ENCODE measurements at regions of chr14 and their contacts with region 1.

Region 1: GRCh38 chr14:50773632-50774541 is 57.1 kb downstream of the NIN start:
- DNase-seq: peak in 1 of 2 donors; percentile 77
- ATAC-seq: peak; percentile 78
- H3K4me3 ChIP-seq: no peak overlapping the region
- H3K27ac ChIP-seq: peak overlapping the region in 1 of 2 donors; percentile 42
- H3K4me1 ChIP-seq: peaks cover 3 to 4% of the 10 kb centered on the region in 2 donors
- H3K27me3 ChIP-seq: no peaks in the 10 kb centered on the region

Region 2: DNA sequence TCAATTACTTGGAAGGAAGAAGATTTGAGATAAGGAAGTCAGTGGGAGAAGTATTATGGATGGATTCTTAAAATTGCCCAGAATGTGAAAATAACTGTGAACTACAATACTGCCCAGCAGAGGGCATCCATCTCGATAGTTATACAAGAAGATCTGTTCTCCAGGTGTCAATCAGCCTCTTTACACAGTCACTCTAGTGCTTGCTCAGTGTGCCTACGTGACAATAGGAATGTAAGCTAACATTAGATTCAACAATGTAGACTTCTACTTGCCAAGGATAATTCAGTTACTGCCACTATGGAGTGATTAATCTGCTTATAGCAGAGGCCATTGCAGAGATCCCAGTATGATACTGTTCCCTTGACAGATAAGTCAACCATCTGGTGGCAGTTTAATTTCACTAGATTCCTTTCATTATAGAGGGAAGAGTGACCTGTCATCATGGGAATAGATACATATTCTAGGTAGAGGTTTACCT is 230.9 kb before region 1 on chr14:
- intact Hi-C with region 1: loop called (anchors 2 to 5 kb)
- DNase-seq: no peak
- ATAC-seq: peak; percentile 59
- H3K4me3 ChIP-seq: no peak overlapping the region
- H3K27ac ChIP-seq: no peak overlapping the region
- H3K4me1 ChIP-seq: no peaks in the 10 kb centered on the region
- H3K27me3 ChIP-seq: no peaks in the 10 kb centered on the region

Region 3: GRCh38 chr14:50599700-50600444 is 174.0 kb before region 1 on chr14:
- intact Hi-C with region 1: loop called (anchors 5 kb)
- DNase-seq: no peak
- ATAC-seq: no peak
- H3K4me3 ChIP-seq: no peak overlapping the region
- H3K27ac ChIP-seq: no peak overlapping the region
- H3K4me1 ChIP-seq: no peaks in the 10 kb centered on the region
- H3K27me3 ChIP-seq: no peaks in the 10 kb centered on the region

Region 4: DNA sequence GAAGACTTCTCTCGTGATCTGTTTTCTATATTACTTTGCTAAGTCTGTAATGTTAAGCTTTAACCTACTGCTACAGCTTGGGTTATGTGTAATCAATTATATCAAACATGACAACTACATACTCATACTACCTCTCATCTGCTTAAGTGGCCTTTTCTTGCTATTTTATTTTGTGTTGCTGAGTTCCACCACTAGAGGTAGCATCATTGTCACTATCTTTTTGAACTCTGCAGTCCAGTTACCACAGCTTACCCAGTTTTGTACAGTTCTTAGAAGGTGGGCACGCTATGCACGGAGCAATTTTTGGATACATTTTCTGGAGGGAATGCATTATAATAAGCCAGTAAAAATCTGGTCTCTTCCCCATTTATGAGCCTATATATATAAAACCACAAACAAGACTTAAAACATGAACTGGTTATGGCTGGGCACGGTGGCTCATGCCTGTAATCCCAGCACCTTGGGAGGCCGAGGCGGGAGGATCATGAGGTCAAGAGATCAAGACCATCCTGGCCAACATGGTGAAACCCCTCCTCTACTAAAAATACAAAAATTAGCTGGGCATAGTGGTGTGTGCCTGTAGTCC is 154.2 kb before region 1 on chr14:
- intact Hi-C with region 1: loop called (anchors 5 kb)
- DNase-seq: no peak
- ATAC-seq: peak; percentile 57
- H3K4me3 ChIP-seq: no peak overlapping the region
- H3K27ac ChIP-seq: no peak overlapping the region
- H3K4me1 ChIP-seq: no peaks in the 10 kb centered on the region
- H3K27me3 ChIP-seq: no peaks in the 10 kb centered on the region

Region 5: GRCh38 chr14:50667996-50668825 is 105.7 kb before region 1 on chr14 and contains the start of gene SAV1:
- intact Hi-C with region 1: loop called (anchors 5 kb)
- DNase-seq: peak; percentile 88 to 94
- ATAC-seq: peak; percentile 96
- H3K4me3 ChIP-seq: peak within 1 kb of the TSS; percentile 67 to 99
- H3K27ac ChIP-seq: peak within 1 kb of the TSS; percentile 92 to 99
- H3K4me1 ChIP-seq: no peaks in the 10 kb centered on the region
- H3K27me3 ChIP-seq: no peaks in the 10 kb centered on the region
- total RNA-seq, gene SAV1: 56.8 to 65.4 TPM

Region 6: DNA sequence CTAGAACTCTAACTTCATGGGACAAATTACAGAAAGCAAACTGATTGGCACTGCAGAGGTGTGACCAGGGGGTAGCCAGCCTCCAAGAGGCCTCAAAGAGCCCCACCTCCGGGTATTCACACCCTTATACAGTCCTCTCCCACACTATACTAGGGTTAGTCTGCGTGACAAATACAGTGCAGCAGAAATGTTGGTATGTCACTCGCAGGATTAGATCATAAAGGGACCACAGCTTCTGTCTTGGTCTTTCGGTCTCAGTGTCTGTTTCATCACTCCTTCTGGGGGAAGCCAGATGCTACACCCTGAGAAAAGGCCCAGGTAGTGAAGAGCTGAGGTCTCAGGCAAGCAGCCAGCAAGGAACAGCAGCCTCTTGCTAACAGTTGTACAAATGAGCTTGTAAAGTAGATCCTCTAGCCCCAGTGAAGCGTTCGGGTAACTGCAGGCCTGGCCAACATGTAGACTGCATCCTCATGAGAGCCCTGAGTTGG is 36.9 kb before region 1 on chr14:
- intact Hi-C with region 1: loop called in 1 of 2 experiments (anchors 5 kb)
- DNase-seq: no peak
- ATAC-seq: no peak
- H3K4me3 ChIP-seq: no peak overlapping the region
- H3K27ac ChIP-seq: no peak overlapping the region
- H3K4me1 ChIP-seq: peaks cover 0 to 6% of the 10 kb centered on the region in 2 donors
- H3K27me3 ChIP-seq: no peaks in the 10 kb centered on the region

Region 7: DNA sequence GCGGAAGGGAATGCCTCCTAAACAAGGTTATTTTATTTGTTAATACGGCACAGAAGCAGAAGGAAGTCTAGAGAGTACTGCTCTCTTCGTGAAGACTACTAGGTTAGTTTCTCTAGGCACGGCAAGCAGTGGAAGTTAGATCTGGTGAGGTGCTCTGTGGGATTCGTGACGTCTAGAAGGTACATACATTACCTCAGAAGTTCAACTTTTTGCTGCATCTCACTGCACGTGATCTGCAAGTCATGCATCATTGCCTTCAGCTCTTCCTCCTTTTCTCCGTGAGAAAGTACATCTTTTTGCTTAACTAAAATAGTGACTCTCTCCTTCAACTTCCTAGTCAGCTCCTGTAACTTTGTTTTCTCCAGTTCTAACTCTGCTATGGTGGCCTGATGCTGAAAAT is 17.6 kb before region 1 on chr14:
- intact Hi-C with region 1: loop called in 1 of 2 experiments (anchors 2 kb)
- DNase-seq: no peak
- ATAC-seq: no peak
- H3K4me3 ChIP-seq: no peak overlapping the region
- H3K27ac ChIP-seq: no peak overlapping the region
- H3K4me1 ChIP-seq: peaks cover 0 to 2% of the 10 kb centered on the region in 2 donors
- H3K27me3 ChIP-seq: no peaks in the 10 kb centered on the region

Region 8: GRCh38 chr14:50846226-50846880 is 72.5 kb after region 1 on chr14:
- intact Hi-C with region 1: no loop called
- DNase-seq: no peak
- ATAC-seq: no peak
- H3K4me3 ChIP-seq: no peak overlapping the region
- H3K27ac ChIP-seq: no peak overlapping the region
- H3K4me1 ChIP-seq: no peaks in the 10 kb centered on the region
- H3K27me3 ChIP-seq: no peaks in the 10 kb centered on the region

Region 9: DNA sequence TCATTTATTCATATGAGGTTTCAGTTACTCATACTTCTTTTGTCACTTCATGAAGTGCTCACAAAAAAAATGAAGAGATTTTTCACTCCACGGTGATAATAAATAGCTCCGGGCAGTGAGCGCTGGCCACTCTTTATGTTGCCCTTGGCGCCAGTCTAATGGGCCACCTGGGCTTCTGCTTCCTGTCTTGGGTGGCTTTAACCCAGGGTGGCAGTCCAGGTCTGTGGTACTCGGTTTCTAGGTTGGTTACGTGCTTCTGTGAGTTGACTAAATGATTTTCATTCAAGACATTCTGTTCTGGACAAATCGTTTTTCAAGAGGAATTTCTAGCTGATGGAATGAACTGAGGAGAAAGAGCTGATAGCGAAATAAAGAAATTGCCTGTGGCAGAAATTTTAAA is 1329.5 kb after region 1 on chr14:
- intact Hi-C with region 1: no loop called
- DNase-seq: no peak
- ATAC-seq: no peak
- H3K4me3 ChIP-seq: no peak overlapping the region
- H3K27ac ChIP-seq: no peak overlapping the region
- H3K4me1 ChIP-seq: no peaks in the 10 kb centered on the region
- H3K27me3 ChIP-seq: no peaks in the 10 kb centered on the region

Measured in aorta (tissue), 5 donors.